ENCODE measurements at regions of chr19 and their contacts with region 1.

Region 1: GRCh38 chr19:2151339-2152229 is at the start of gene AP3D1:
- DNase-seq: peak; percentile 100
- ATAC-seq: peak; percentile 96 to 98
- total RNA-seq, gene AP3D1: 80.6 to 128 TPM

Region 2: DNA sequence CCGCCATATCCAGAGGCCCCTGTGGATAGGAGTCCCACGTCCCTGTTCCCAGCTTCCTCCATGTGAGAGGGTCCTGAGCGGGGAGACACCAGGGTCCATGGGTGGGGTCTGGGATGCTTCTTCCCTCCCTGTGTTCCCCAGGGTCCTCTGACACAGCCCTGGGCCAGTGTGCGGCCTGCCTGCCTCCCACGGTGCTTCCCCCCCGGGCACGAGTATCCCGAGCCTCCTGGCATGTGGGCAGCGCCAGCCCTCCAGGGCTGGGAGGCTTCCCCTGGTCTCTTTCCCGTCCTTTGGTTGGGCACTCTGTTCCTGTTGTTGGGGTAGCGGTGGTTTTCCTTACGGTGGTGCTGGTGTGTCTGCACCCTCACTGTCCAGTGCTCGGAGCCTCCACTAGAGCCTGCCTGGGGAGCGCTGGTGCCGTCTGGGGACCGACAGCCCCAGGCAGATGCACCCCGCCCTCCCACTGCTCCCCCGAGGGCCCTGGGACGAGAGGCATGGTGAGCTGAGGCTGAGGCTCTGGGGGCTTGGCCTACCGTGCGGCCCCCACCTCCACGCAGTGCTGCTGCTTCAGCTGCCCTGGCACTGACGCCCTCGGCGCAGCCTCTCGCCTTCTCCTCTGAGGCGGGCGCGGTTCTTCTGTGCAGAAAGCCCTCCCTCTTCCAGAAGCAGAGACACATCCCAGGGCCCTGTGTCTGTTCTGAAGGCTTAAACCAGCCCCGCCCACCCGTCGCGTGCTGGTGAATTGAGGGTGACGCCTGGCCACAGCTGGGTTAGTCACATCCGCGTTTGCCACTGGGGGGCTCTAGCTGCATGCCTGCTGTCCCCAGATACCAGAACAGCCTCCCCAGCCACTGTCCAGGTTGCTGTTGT is 56.6 kb after region 1 on chr19:
- intact Hi-C with region 1: loop called in 1 of 2 experiments (anchors 10 kb)
- DNase-seq: peak; percentile 85
- ATAC-seq: peak; percentile 53 to 65

Region 3: GRCh38 chr19:2236314-2237050 is 84.9 kb after region 1 on chr19 and contains the starts of genes PLEKHJ1 and SF3A2:
- intact Hi-C with region 1: loop called (anchors 10 kb)
- DNase-seq: peak; percentile 97
- ATAC-seq: peak; percentile 92 to 93
- total RNA-seq, gene PLEKHJ1: 45.2 to 45.7 TPM
- total RNA-seq, gene SF3A2: 28.8 to 34.4 TPM

Region 4: DNA sequence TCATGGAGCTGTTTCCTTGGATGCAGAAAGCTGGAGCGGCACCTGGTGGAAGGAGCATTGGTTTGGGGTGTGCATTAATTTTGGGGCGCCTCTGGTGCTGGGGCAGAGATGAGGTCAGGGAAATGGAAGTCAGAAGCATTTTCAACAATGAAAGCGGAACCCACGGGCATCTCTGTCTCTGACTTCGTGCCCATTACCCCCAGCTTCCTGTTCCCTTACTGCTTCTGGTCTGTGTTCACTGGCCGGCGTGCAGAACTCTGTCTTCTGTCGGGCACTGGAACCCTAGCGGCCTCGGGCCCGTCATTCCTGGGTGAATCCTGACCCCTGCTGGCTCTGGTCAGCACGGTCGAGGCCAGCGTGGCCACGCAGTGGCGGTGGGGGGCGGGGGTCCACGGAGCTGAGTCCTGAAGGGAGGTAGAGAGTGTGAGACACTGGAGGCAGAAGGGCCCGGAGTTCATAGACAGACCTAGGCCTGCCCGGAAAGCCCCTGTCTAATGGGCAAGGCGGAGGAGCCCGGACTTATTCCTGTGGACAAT is 164.3 kb after region 1 on chr19:
- intact Hi-C with region 1: loop called (anchors 5 to 10 kb)
- DNase-seq: peak; percentile 75
- ATAC-seq: peak; percentile 91 to 93

Measured in left cardiac atrium (tissue), 4 donors.